ENCODE measurements at regions of chr18 and their contacts with region 1.

Region 1: GRCh38 chr18:9082711-9083510 is 19.6 kb upstream of the NDUFV2 start:
- DNase-seq: peak; percentile 54
- CTCF ChIP-seq: no peak

Region 2: DNA sequence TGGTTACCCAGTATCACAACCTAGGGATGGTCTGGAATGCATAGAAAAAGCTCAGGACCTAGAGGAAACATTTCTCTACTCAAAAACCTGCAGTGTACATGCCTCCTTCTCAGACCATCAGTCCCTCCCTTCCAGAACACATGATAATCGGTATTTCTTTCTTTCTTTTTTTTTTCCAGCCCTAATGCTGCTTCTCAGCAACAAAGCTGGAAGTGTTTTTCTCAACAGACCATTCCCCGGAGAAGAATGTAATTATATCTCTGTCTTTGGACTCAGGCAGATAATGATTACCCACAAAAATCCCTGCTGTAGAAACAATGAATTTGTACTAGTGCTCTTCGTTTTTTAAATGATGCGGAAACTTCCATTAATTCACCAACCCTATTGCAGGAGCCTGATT is 24.5 kb before region 1 on chr18:
- CTCF ChIA-PET with region 1: no interaction called
- POLR2A ChIA-PET with region 1: no interaction called
- DNase-seq: no peak
- CTCF ChIP-seq: no peak

Region 3: DNA sequence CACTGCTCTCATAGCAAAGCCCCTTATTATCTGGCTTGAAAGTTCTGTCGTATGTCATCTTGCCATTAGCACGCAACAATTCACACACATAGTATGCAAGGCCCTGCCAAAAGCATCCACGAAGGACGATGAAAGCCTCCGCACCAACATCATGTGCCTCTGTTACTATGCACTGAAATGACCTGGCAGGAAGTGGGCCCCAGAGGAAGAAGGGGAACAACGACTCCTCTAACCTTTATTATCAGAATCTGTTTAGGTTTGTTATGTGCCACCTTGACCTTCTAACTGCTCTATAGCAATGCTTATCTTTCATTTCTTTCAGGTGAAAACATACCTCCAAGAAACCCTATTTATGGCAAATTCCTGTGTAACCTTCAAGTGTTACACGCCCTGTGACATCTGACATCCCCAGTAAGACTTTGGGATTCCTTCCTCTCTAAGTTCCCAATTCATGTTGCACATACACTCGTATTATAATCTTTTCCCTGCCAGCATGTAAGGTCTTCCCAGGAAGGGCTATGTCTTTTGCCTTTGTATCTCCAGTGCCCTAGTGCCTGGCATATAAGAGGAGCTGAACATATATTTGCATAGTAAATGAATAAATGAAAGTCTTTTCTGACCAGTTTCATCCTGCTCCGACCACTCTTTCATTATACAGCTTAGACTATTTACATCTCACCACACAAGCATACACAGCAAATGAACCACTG is 12.5 kb after region 1 on chr18:
- CTCF ChIA-PET with region 1: interaction called, 11 read pairs
- POLR2A ChIA-PET with region 1: no interaction called
- DNase-seq: peak; percentile 53
- CTCF ChIP-seq: no peak

Measured in GM10248 (cell line).